ENCODE measurements at regions of chr5 and their contacts with region 1.

Region 1: DNA sequence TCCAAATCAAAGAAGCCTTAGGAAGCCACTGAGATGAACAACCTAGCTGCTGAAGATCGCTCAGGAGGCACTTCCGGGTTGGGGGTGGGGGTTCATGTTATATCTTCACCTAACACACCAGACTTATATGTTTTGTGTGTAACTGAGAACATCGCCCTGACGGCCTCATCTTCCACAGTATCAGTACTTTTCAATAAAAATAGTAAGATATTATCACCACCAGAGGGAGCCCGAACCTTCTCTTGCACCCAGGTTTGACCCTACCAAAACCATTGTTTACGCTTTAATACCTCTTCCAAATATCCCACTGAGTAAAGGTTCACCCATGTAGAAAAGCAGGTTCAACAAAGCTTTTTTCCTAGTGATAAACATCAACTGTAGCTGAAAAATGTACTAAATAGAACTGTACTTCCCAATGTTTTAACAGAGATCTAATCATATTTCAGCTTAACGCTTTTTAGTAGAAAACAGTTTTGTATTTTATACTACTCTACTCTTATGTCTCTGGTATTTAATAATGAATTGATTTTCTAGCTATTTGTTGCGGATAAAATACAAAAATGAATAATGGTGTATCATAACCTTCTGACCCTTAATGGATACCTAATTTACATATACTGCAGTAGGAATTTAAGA is 244.0 kb downstream of the EPB41L4A start:
- DNase-seq: no peak
- H3K4me3 ChIP-seq: peak overlapping the region in 10 of 59 donors; percentile 1 to 31 (median 18)
- H3K27ac ChIP-seq: no peak overlapping the region
- H3K27me3 ChIP-seq: no peaks in the 10 kb centered on the region
- CTCF ChIP-seq: peak; percentile 61 to 85 (median 74)

Region 2: DNA sequence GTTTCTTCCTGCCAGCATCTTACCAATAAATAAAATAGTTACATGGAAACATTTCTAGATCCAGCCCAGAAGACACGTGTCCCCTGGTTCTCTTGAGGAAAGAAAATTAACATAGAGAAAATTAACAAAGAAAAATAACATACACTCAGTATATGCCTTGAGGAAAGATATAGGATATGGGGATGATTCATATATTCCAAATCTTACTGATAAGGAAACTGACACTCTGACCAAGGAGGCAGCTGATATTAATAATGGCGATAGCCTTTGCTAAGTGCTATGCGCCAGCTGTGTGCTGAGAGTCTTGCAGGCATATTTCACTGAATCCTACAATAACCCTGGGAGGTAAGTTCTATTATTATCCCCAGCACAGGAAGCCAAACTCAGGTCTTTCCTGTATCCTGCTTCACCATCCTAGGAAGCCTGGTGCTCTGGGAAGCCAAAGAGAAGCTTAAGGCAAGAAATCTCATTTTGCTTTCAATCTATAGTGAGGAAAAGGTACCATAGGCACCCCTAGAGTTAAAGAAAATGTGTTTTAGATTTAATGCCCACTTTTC is 115.4 kb before region 1 on chr5:
- intact Hi-C with region 1: no loop called
- DNase-seq: no peak
- H3K4me3 ChIP-seq: no peak overlapping the region
- H3K27ac ChIP-seq: peak overlapping the region in 2 of 59 donors; percentile 17 to 31
- H3K27me3 ChIP-seq: no peaks in the 10 kb centered on the region
- CTCF ChIP-seq: no peak

Region 3: DNA sequence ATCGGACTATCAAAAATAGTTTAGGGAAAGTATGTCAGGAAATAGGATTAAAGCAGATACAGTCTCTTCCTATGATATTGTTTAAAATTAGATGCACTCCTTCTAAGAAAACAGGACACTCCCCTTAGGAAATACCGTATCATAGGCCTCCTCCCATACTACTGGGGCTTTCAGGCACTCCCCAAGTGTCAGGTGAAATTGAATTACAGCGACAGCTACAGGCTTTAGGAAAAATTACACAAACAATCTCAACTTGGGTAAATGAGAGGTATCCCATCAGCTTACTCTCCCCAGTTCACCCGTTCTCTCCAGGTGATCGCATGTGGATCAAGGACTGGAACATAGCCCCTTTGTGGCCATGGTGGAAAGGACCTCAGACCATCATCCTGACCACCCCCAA is 354.4 kb after region 1 on chr5:
- intact Hi-C with region 1: loop called in 1 of 2 experiments (anchors 5 kb)
- DNase-seq: no peak
- H3K4me3 ChIP-seq: no peak overlapping the region
- H3K27ac ChIP-seq: no peak overlapping the region
- H3K27me3 ChIP-seq: no peaks in the 10 kb centered on the region
- CTCF ChIP-seq: peak in 55 of 56 donors; percentile 14 to 73 (median 44)

Region 4: DNA sequence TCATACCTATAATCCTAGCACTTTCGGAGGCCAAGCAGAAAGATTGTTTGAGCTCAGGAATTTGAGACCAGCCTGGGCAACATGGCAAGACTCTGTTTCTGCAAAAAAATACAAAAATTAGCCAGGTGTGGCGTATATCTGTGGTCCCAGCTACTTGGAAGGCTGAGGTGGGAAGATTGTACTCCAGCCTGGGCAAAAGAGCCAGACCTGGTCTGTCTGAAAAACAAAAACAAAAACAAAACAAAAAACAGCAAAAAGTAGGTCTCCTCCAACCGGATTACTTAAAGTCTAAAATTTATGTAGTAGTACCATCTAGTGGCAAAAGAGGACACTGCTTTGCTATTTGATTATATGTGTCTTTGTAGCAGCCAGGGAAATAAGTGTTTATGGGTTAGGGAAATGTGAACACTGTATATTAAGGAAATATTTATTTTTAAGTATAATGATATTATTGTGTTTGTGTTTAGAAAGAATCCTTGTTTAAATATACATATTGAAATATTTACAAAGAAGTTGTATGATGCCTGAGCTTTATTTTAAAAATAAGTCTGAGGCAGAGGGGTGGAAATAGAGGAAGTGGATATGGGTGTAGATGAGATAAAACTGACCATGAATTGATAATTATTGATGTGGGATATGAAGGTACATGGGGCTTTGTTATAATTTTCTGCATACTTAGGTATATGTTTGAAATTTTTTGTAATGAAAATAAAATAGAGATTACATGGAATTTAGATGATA is 582.6 kb after region 1 on chr5:
- intact Hi-C with region 1: loop called in 1 of 2 experiments (anchors 10 kb)
- DNase-seq: no peak
- H3K4me3 ChIP-seq: peak overlapping the region in 14 of 59 donors; percentile 2 to 44 (median 28)
- H3K27ac ChIP-seq: peak overlapping the region in 54 of 59 donors; percentile 1 to 79 (median 50)
- H3K27me3 ChIP-seq: no peaks in the 10 kb centered on the region
- CTCF ChIP-seq: peak; percentile 70 to 97 (median 88)